Heart left ventricle (tissue), 16 donors: ENCODE measurements at regions of chr20 and their contacts with region 1.

Region 1: GRCh38 chr20:23178806-23179205 is 92.7 kb upstream of the CD93 start:
- DNase-seq: peak in 3 of 5 donors; percentile 51 to 68 (median 67)
- ATAC-seq: peak; percentile 33 to 85 (median 69)
- H3K4me3 ChIP-seq: no peak overlapping the region
- H3K27ac ChIP-seq: peak overlapping the region in 10 of 12 donors; percentile 57 to 84 (median 68)
- H3K4me1 ChIP-seq: peaks cover 0 to 33% (median 14%) of the 10 kb centered on the region in 12 donors
- H3K27me3 ChIP-seq: no peaks in the 10 kb centered on the region
- CTCF ChIP-seq: peak; percentile 29 to 61 (median 50)
- POLR2A ChIP-seq: no peak

Region 2: DNA sequence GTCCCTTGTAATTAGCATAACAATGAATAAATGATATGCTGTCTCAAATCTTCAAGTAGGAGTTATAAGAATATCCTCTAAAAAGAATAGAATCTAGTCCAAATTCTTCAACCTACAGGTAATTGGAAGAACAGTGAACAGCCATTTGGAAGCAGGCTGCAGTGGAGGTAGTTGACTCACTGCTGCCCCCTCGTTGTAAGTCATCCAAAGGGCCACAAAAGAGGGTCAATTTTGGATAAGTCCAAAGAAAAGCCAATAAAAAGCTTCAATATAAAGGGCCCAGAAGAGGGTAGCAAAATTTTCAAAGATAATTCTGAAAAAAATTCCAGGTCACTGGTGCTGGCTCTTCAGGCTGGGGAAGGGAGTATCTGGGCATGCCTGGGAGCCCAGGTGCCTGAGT is 204.5 kb before region 1 on chr20:
- intact Hi-C with region 1: loop called in 1 of 10 experiments (anchors 10 kb)
- DNase-seq: no peak
- ATAC-seq: no peak
- H3K4me3 ChIP-seq: no peak overlapping the region
- H3K27ac ChIP-seq: no peak overlapping the region
- H3K4me1 ChIP-seq: peaks cover 0 to 20% (median 13%) of the 10 kb centered on the region in 12 donors
- H3K27me3 ChIP-seq: peaks cover 0 to 3% (median 0%) of the 10 kb centered on the region in 9 donors
- CTCF ChIP-seq: peak in 5 of 12 donors; percentile 7 to 27 (median 14)
- POLR2A ChIP-seq: no peak

Region 3: DNA sequence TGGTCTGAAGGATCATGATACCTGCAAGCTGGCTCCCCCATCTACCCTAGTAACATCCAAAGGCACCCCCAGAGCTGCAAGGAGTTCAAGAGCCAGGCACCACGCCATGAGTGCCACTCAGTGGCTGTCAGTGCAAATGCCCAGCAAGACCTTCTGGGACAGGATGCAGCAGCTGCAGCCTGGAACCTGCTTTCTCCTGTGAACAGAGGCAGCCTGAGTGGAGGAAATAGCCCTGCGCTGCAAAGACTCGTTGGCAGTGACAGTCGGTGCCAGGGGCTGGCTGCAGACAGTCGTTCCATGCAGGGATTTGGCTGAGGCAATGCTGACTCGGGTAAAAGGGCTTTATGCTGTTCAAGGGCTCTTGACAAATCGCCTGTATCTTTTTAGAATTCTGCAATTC is 159.4 kb before region 1 on chr20:
- intact Hi-C with region 1: no loop called
- DNase-seq: peak in 1 of 5 donors; percentile 4
- ATAC-seq: no peak
- H3K4me3 ChIP-seq: no peak overlapping the region
- H3K27ac ChIP-seq: no peak overlapping the region
- H3K4me1 ChIP-seq: peaks cover 0 to 11% (median 0%) of the 10 kb centered on the region in 12 donors
- H3K27me3 ChIP-seq: no peaks in the 10 kb centered on the region
- CTCF ChIP-seq: no peak
- POLR2A ChIP-seq: no peak

Region 4: DNA sequence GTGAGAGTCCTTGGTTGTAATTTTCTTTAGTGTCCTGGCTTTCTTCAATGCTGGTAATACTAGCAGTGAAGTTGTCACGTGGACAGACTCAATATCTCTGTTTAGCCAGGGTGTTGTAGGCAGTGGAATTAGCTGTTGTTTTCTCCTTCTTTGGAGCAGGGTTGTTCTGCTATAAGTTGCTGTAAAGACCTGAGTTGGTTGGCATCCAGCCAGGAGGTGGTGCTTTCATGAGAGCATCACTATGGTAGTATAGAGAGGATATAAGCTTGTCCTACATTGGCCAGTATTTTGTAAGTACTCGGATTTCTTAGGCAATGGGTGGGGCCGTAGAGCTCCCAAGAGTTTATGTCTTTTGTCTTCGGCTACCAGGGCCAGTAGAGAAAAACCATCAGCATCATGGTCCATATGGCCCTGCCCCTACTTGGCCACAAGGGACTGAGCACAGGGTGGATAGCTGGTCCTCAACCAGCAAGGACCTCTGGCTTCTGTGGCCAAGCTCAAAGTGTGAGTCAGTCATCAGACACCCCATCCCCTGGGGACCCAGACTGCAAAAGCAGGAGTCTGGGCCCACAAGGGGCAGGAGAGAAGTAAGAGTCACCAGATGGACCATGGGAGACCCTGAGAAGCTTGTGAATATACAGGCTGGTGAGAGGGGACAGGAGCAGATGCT is 43.9 kb after region 1 on chr20:
- intact Hi-C with region 1: no loop called
- DNase-seq: no peak
- ATAC-seq: no peak
- H3K4me3 ChIP-seq: no peak overlapping the region
- H3K27ac ChIP-seq: no peak overlapping the region
- H3K4me1 ChIP-seq: peaks cover 0 to 23% (median 0%) of the 10 kb centered on the region in 12 donors
- H3K27me3 ChIP-seq: no peaks in the 10 kb centered on the region
- CTCF ChIP-seq: no peak
- POLR2A ChIP-seq: no peak